Aorta (tissue), 5 donors: ENCODE measurements at regions of chr21 and their contacts with region 1.

Region 1: DNA sequence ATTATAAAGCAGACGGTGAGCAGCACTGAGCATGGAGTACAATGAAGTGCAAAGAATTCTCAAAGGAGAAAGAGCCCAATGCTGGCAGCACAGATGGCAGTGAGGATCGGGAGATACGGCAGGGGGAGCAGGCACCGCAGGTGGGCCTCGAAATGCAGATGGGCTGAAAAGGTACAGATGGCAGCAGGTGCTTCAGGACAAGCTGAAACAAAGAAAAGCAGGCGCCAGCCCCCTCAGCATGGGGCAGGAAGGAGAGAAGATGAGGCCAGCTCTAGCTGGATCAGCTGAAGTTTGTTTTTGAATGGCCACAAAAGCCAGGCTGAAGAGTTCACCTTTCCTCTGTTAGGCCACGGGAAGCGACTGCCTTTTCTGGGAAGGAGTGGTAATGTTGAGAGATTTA is 7.7 kb downstream of the CFAP298 start:
- DNase-seq: no peak
- ATAC-seq: no peak
- H3K4me3 ChIP-seq: no peak overlapping the region
- H3K27ac ChIP-seq: no peak overlapping the region
- H3K4me1 ChIP-seq: no peaks in the 10 kb centered on the region
- H3K27me3 ChIP-seq: no peaks in the 10 kb centered on the region

Region 2: GRCh38 chr21:31866077-31866511 is 738.4 kb before region 1 on chr21:
- intact Hi-C with region 1: loop called in 1 of 2 experiments (anchors 10 kb)
- DNase-seq: peak; percentile 89 to 96
- ATAC-seq: peak; percentile 88
- H3K4me3 ChIP-seq: no peak overlapping the region
- H3K27ac ChIP-seq: no peak overlapping the region
- H3K4me1 ChIP-seq: no peaks in the 10 kb centered on the region
- H3K27me3 ChIP-seq: no peaks in the 10 kb centered on the region

Region 3: DNA sequence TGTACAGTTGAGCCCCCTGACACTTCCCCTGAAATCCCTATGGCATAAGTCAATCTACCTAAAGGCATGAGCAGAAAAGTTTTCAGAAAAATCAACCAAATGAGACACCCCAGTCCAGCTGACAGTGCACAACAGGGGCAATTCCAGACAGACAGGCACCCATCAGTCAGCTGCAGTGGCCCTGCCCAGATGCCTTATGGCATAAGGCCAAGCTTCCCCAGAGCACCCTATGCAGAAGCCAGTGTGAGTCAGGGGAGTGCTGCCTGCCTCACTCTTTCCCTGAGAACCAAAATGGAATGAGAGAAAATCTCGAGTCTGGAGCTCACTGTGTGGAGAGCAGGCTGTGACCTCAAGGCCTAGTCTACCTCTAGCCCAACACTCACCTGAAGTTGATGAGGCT is 267.8 kb before region 1 on chr21:
- intact Hi-C with region 1: loop called in 1 of 2 experiments (anchors 10 kb)
- DNase-seq: no peak
- ATAC-seq: no peak
- H3K4me3 ChIP-seq: no peak overlapping the region
- H3K27ac ChIP-seq: no peak overlapping the region
- H3K4me1 ChIP-seq: no peaks in the 10 kb centered on the region
- H3K27me3 ChIP-seq: no peaks in the 10 kb centered on the region

Region 4: DNA sequence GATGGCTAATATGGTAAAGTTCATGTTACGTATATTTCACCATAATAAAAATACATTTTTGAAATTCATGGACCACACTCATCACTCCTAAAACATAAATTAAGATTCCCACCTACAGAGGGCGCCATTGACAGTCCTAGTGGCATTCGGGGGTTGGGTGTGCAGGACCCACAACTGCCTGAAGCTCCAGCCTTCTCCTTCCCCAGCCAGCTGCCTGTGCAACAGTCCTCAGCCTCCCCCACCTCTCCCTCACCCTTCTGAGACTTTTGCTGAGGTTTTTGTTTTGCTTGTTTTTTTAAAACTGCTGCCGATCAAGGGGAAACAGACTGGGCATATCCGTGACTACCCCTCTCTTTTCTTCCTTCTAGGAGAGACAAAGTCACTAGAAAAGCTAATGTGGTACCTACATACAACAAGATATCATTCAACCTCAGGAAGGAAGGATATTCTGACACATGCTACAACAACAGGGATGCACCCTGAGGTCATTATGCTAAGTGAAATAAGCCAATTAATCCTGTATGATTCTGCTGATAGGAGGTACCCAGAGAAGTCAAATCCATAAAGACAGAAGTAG is 201.2 kb before region 1 on chr21:
- intact Hi-C with region 1: loop called (anchors 2 to 5 kb)
- DNase-seq: peak in 1 of 2 donors; percentile 68
- ATAC-seq: peak; percentile 85
- H3K4me3 ChIP-seq: no peak overlapping the region
- H3K27ac ChIP-seq: no peak overlapping the region
- H3K4me1 ChIP-seq: no peaks in the 10 kb centered on the region
- H3K27me3 ChIP-seq: no peaks in the 10 kb centered on the region